Head of caudate nucleus (tissue), 42 donors: ENCODE measurements at regions of chr7 and their contacts with region 1.

Region 1: GRCh38 chr7:76179686-76180085 is 22.0 kb upstream of the SRRM3 start:
- DNase-seq: no peak

Region 2: DNA sequence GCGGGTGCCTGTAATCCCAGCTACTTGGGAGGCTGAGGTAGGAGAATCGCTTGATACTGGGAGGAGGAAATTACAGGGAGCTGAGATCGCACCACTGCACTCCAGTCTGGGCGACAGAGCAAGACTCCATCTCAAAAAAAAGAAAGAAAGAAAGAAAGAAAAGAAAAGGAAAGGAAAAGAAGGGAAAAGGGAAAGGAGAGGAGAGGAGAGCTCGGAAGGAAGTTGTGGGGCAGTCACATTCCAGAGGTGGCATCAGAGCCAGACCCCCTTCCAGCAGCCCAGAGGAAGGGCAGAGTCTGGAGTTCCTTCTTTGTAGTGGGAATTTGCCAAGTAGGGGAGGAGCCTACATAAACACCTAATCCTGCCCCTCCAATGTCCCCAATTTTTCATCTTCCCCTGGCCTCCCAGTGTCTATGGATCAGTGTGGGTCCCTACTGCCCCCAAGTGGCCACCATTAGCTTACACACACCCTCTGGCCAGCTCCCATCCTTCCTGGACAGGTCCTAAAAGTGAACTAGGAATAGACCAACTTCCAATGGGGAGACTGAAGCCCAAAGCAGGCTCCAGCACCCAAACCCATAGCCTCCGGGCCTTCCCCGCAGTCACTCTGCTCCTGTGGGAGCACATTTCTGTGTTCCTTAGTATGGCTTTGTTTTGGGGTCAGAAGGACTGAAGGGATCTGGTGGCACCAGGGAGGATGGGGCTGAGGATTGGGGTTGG is 83.2 kb after region 1 on chr7:
- intact Hi-C with region 1: loop called (anchors 5 kb)
- DNase-seq: peak in 41 of 42 donors; percentile 26 to 84 (median 63)